ENCODE measurements at regions of chr15 and their contacts with region 1.

Region 1: GRCh38 chr15:57079931-57080620 is 161.6 kb downstream of the TCF12 start:
- DNase-seq: no peak
- H3K4me3 ChIP-seq: no peak overlapping the region
- H3K27ac ChIP-seq: no peak overlapping the region
- H3K4me1 ChIP-seq: peaks cover 32% of the 10 kb centered on the region
- H3K27me3 ChIP-seq: no peaks in the 10 kb centered on the region
- CTCF ChIP-seq: no peak
- POLR2A ChIP-seq: no peak

Region 2: DNA sequence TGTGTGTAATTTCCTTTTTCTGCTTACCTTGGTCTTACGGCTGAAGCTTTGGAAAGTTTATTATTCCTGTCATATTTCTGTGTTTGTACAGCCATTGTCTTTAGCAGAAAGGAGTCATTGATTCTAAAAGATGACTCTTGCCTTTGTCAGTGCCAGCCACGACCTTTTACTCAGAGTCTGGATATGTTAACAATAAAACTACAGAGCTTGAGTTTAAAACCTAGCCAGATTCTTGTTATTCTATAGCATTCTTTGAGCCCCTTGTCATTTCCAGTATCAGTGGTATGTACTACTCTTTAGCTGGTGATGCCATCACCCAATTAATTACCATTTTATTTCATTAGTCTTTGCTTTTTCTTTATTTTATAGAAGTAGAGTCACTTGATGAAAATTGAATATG is 19.3 kb before region 1 on chr15:
- CTCF ChIA-PET with region 1: interaction called, 5 read pairs
- POLR2A ChIA-PET with region 1: no interaction called
- dilution Hi-C with region 1: no loop called
- intact Hi-C with region 1: loop called (anchors 2 kb)
- DNase-seq: peak; percentile 89
- H3K4me3 ChIP-seq: peak overlapping the region in 1 of 3 experiments; percentile 13
- H3K27ac ChIP-seq: peak overlapping the region; percentile 99
- H3K4me1 ChIP-seq: peaks cover 57% of the 10 kb centered on the region
- H3K27me3 ChIP-seq: no peaks in the 10 kb centered on the region
- CTCF ChIP-seq: no peak
- POLR2A ChIP-seq: no peak

Region 3: DNA sequence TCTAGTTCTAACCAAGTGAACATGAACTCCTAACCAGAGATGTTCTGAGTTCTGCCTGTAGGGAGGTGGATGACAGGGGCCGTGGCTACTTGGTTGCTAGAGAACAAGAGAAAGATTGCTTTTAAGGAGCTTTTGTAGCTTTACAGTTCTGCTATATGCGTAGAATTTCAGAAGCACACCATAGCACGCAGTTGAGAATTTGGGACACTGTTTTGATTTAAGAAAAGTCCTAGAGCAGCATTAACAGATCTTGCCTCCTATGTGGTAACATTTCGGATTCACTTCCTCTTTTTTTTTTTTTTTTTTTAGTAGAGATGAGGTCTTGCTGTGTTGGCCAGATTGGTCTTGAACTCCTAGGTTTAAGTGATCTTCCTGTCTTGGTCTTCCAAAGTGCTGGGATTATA is 20.1 kb after region 1 on chr15:
- CTCF ChIA-PET with region 1: no interaction called
- POLR2A ChIA-PET with region 1: no interaction called
- dilution Hi-C with region 1: no loop called
- intact Hi-C with region 1: no loop called
- DNase-seq: no peak
- H3K4me3 ChIP-seq: no peak overlapping the region
- H3K27ac ChIP-seq: no peak overlapping the region
- H3K4me1 ChIP-seq: no peaks in the 10 kb centered on the region
- H3K27me3 ChIP-seq: no peaks in the 10 kb centered on the region
- CTCF ChIP-seq: no peak
- POLR2A ChIP-seq: no peak

Measured in endothelial cell of umbilical vein (primary cell).